AG04449 (cell line): ENCODE measurements at regions of chr4 and their contacts with region 1.

Region 1: DNA sequence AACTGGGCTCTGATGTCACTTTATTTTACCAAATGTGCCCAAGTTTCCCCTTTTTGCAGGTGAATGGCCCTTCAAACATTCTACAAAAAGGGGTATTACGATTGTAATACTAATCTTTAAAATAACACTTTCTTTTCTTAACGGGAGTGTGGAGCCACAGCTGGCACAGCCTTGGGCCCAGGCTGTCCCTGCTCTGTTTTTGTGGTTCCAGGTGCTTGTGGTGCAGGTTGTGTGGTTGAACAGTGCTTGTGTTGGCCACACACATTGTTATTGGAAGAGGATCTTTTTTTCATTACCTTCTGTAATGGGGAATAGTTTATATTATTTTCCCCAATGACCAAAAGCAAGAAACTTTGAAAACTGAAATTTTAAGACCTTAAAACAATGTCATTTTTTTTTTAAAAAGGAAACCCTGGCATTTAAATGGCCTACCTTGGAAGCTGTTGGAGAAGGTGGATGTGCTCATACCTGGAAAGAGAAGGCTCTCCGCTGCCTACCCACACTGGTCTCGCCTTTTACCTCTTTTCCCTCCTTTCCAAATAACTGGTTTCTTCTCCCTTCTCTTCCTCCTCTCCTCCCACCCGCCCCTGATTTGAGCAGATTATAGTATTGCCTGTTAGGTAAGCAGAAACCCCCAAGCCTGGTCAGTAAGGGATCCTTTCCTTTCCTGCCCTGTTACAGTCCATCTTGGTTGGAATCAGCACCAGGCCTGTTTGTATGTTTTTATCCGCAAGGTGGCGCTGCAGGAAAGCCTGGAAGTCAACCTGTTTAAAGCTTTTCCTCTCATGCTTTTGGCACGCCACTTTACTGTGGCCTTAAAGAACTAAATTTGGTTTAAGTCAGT is 28.6 kb downstream of the HADH start:
- DNase-seq: peak; percentile 17
- H3K4me3 ChIP-seq: no peak overlapping the region
- CTCF ChIP-seq: peak; percentile 77

Region 2: DNA sequence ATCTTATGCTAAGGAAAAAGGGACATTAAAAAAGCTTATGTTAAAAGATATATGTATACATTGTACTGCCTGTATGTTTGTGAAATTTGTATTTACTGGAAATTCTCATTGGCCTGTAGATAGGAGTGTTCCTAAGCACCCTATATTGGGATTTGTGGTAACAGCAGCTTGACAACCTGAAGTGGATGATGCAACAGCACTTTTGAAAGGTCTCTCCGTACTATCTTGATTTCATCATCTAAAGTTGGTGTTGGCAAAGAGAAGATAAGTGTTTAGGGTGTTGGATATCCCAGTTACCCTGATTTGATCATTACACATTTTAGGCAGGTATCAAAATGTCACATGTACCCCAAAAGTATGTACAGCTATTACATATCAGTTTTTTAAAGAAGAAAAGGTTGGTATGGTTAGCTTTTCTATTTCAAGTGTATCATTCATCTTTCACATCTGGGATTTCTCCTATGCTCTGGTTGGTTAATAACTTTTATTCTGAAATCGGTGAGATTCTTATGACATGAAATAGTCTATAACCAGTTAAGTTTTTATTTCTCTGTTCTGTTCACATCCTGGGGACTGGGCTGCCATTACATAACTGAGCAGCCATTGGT is 18.2 kb before region 1 on chr4:
- CTCF ChIA-PET with region 1: interaction called, 20 read pairs
- POLR2A ChIA-PET with region 1: no interaction called
- DNase-seq: no peak
- H3K4me3 ChIP-seq: no peak overlapping the region
- CTCF ChIP-seq: no peak

Region 3: GRCh38 chr4:108030332-108030731 is 12.1 kb after region 1 on chr4:
- CTCF ChIA-PET with region 1: interaction called, 67 read pairs
- POLR2A ChIA-PET with region 1: no interaction called
- DNase-seq: peak; percentile 21
- H3K4me3 ChIP-seq: no peak overlapping the region
- CTCF ChIP-seq: peak; percentile 69

Region 4: DNA sequence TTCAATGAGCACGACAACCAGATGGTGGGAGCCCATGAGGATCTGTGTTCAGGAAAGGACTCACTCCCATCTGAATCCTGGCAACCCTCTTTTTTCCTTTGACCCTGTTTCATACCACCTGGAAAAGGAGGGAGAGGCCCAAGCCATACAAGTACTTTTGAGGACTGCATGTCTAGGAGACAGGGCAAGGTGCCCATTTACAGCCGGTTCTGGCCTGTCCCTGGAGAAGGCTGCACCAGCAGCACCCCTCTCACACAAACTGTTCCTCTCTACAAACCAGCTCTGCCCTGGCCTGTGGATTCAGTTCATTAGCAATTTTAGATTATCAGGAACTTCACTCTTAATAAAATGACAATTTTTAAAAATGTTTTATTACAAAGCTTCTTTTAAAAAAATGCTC is 28.9 kb after region 1 on chr4:
- CTCF ChIA-PET with region 1: interaction called, 12 read pairs
- POLR2A ChIA-PET with region 1: no interaction called
- DNase-seq: no peak
- H3K4me3 ChIP-seq: no peak overlapping the region
- CTCF ChIP-seq: no peak

Region 5: DNA sequence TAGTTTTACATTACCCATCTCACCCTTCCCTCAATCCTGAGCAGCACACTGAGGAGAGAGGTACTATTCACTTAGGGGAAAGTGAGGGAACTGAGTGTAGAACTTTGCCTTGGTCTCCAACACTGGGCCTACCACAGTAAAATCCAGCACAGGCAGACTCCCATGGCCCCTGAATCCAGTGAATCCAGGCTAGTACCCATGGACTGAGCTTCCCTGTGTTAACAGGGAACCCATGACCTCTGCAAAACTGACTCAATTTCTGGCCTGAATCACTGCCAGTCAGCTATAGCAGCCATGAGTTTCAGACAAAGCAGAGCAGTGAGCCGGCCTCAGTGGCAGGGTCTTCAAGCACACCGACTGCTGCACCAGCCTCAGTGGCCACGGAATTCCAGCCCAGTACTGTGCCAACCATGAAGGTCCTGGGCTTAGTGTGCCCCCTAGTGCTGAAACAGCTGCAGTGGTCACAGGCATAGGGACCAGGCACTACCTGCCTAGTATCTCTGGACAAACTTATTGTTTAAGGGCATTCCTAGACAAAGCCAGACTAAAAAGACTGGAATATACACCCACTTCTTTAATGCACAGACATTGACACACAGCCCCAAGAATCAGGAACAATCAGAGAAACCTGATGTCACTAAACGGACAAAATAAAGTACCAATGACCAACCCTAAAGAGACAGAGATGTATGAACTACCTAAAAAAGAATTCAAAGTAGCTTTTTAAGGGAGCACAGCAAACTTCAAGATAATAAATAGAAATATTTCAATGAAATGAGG is 474.7 kb after region 1 on chr4:
- CTCF ChIA-PET with region 1: interaction called, 18 read pairs
- POLR2A ChIA-PET with region 1: no interaction called
- DNase-seq: no peak
- H3K4me3 ChIP-seq: no peak overlapping the region
- CTCF ChIP-seq: peak; percentile 68

Region 6: GRCh38 chr4:108560616-108561015 is 542.4 kb after region 1 on chr4:
- CTCF ChIA-PET with region 1: interaction called, 17 read pairs
- POLR2A ChIA-PET with region 1: no interaction called
- DNase-seq: no peak
- H3K4me3 ChIP-seq: no peak overlapping the region
- CTCF ChIP-seq: no peak

Region 7: GRCh38 chr4:108581083-108581482 is 562.8 kb after region 1 on chr4:
- CTCF ChIA-PET with region 1: interaction called, 176 read pairs
- POLR2A ChIA-PET with region 1: no interaction called
- DNase-seq: no peak
- H3K4me3 ChIP-seq: no peak overlapping the region
- CTCF ChIP-seq: no peak